PC-9 (cell line): ENCODE measurements at regions of chr3 and their contacts with region 1.

Region 1: DNA sequence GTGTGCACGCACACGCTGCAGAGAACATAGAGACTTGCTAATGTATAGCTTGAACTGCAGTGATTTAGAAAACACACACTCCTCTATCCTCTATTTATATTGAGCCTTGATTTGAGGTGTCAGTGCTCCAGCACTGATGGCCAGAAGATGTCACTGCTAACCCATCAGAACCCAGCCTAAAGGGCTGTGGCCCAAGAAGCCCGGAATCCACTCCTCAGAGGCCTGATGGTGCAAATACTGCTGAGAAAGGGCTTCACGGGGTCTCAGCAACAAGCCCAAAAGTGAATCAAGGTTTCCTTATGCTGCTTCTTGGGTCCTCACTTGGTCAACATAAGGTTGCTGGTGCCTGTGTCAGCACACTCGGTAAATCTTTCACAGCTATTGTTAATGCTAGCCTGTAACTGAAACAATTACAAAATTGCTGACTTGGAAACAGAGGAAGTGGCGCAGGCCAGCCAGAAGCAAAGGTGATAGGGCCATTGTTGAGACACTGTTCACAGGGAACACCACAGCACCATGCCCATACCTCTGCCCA is 60.3 kb downstream of the HEG1 start:
- DNase-seq: peak; percentile 52 to 54
- H3K4me3 ChIP-seq: no peak overlapping the region
- H3K27ac ChIP-seq: no peak overlapping the region
- H3K4me1 ChIP-seq: no peaks in the 10 kb centered on the region
- H3K27me3 ChIP-seq: no peaks in the 10 kb centered on the region
- CTCF ChIP-seq: peak; percentile 80

Region 2: DNA sequence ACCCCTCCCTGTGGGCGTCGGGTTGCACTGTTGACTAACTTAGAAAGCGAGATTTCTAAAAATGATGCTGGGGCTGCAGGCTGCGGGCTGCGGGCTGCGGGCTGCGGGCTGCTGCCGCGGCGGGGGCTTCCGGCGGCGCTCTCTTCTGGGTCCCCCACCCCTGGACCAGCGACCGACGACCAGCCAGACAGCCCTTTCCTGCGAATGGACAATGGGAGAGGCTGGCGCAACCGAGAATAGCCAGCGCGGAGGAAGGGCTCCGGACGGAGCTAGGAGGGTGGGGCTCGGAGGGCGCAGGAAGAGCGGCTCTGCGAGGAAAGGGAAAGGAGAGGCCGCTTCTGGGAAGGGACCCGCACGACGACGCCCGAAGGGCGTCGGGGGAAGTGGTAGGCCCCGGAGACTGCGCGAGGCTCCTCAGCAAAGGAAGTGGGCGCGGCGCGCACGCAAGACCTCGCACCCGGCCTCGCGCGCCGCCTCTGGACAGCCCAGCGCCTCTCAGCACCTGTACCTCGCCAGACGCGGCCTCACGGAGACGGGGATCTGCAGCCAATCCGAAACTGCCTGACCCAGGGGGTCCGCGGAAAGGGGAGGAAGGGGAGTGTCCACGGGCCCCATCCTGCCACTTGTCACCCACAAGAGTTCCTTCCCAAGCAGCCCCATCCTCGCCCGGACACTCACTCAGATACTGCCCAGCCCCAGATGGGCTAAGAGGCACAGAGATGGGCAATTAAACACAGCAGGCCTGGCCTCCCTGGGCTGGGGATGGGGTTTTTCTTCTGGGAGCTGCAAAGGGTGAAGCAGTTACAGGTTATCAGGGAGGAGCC is 146.3 kb after region 1 on chr3:
- CTCF ChIA-PET with region 1: no interaction called
- POLR2A ChIA-PET with region 1: no interaction called
- intact Hi-C with region 1: loop called (anchors 1 kb)
- DNase-seq: no peak
- H3K4me3 ChIP-seq: no peak overlapping the region
- H3K27ac ChIP-seq: no peak overlapping the region
- H3K4me1 ChIP-seq: peaks cover 12% of the 10 kb centered on the region
- H3K27me3 ChIP-seq: no peaks in the 10 kb centered on the region
- CTCF ChIP-seq: no peak

Region 3: DNA sequence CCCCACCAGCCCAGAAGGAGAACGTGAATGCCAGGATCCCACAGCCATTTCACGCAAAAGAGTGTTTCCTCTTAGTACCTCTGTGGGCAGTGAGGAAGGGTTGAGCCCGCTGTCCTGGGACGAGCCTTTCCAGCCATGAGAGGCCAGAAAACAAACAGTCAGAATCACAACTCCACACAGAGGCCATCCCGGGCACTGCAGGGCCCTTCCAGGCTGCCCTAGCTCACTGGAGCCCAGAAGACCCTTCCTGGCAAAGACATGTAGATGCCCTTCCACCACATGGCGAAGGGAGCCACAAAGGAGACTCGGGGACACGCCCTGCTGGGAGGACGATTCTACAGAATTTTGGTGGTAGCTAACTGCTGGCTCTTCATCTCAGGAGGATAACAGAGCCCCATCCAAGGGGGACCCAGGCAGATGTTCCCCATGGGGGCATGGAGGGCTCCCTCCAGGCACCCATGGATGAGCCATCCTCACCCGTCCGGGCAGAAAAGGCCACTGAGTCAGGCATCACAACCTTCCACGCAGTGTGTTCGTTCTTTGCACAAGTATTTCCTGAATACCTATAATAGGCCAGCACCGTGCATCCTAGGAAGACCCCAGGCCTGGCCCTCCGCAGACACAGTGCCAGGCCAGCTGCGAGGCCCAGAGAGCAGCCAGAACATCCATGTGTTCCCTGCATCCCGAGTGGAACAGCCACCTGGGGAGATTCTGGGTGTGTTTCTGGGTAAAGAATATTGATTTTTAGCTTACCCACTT is 169.8 kb after region 1 on chr3:
- CTCF ChIA-PET with region 1: interaction called, 5 read pairs
- POLR2A ChIA-PET with region 1: no interaction called
- intact Hi-C with region 1: loop called (anchors 1 kb)
- DNase-seq: no peak
- H3K4me3 ChIP-seq: no peak overlapping the region
- H3K27ac ChIP-seq: no peak overlapping the region
- H3K4me1 ChIP-seq: peaks cover 15% of the 10 kb centered on the region
- H3K27me3 ChIP-seq: no peaks in the 10 kb centered on the region
- CTCF ChIP-seq: peak; percentile 44; the same call in 1 of the 2 replicates

Region 4: DNA sequence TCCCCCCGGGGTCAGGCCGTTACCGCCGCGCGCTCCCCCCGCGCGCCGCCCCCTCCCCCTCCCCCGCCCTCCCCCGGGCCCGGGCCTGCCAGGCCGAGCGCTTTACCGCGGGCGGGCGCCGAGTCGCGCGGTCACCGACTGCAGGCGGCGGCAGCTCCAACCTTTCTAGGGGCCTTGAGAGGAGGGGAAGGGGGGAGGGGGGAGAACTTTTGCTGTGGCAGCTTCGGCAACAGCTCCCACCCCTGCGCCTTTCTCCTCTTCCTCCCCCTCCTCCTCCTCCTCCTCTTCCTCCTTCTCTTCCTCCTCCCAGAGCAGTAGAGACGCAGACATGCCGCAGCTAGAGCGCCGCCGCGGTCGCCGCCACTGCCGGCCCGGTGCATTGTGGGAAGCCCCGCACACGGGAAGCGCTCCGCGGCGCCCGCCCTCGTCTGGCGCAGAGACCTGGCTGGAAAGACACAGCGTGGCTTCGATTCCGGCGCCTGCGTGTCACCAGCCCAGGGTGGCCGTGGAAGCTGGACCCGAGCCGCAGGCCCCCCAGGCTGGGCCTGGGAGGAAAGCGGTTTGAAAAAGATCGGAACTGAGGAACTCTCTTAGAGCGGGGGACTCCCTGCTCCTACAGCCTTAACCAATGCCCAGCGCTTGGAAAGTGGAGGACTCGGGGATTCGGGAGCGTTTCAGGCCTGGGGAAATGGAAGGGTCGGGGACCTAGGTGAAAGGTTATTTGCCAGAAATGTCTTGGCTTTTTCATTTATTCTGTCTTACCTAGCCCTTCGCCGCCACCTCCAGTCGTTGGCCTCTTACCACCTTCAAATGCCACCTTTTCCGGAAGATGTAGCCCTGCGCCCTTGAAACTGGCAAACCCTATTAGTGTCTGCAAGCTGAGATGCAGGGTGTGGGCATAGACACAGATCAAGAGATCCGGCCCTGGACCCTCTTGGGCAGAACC is 379.7 kb after region 1 on chr3 and contains the start of gene ZNF148:
- CTCF ChIA-PET with region 1: no interaction called
- POLR2A ChIA-PET with region 1: no interaction called
- intact Hi-C with region 1: loop called (anchors 2 kb)
- DNase-seq: peak; percentile 76 to 94
- H3K4me3 ChIP-seq: peak within 1 kb of the TSS; percentile 75
- H3K27ac ChIP-seq: peak within 1 kb of the TSS; percentile 64
- H3K4me1 ChIP-seq: peaks cover 19% of the 10 kb centered on the region
- H3K27me3 ChIP-seq: no peaks in the 10 kb centered on the region
- CTCF ChIP-seq: no peak
- total RNA-seq, gene ZNF148: 53.8 and 62.6 TPM in 2 replicates

Region 5: GRCh38 chr3:125437631-125438435 is 442.3 kb after region 1 on chr3:
- CTCF ChIA-PET with region 1: interaction called, 6 read pairs
- POLR2A ChIA-PET with region 1: interaction called, 7 read pairs
- intact Hi-C with region 1: loop called (anchors 1 kb)
- DNase-seq: peak in 1 of 2 experiments; percentile 51
- H3K4me3 ChIP-seq: no peak overlapping the region
- H3K27ac ChIP-seq: no peak overlapping the region
- H3K4me1 ChIP-seq: peaks cover 8% of the 10 kb centered on the region
- H3K27me3 ChIP-seq: no peaks in the 10 kb centered on the region
- CTCF ChIP-seq: peak; percentile 99

Region 6: GRCh38 chr3:125585595-125586223 is 590.2 kb after region 1 on chr3:
- CTCF ChIA-PET with region 1: interaction called, 4 read pairs
- POLR2A ChIA-PET with region 1: no interaction called
- intact Hi-C with region 1: loop called (anchors 1 kb)
- DNase-seq: peak; percentile 55 to 56
- H3K4me3 ChIP-seq: no peak overlapping the region
- H3K27ac ChIP-seq: no peak overlapping the region
- H3K4me1 ChIP-seq: no peaks in the 10 kb centered on the region
- H3K27me3 ChIP-seq: no peaks in the 10 kb centered on the region
- CTCF ChIP-seq: peak; percentile 84